ENCODE measurements at regions of chr1 and their contacts with region 1.

Region 1: DNA sequence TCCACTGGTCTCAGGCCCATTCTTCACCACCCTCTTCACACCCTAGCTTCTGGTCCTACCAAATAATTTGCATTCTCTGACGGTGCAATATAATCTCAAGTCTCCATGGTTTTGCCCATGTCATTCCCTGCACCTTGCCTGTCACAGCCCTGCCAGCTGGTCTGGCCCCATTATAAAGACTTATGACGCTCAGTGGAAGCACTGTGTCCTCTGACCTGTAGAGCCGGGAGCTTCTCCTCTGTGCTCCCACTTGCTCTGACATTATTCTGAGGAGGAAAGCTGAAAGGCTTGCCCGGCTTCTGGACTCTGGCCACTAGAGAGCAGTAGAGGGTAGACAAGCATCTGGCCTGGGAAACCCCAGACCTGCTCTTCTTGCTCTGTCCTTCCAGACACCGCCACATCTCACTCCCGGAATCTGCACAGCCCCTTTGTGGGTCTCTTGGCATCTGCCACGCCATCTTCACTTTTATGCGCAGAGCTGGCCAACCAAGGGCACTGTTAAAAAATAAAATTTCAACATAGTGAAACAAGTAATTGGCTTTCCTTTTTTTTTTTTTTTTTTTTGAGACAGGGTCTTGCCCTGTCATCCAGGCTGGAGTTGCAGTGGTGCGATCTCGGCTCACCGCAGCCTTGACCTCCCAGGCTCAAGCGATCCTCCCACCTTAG is 44.4 kb downstream of the NENF start:
- DNase-seq: peak; percentile 87
- H3K4me3 Mint-ChIP-seq: peak overlapping the region; percentile 11
- H3K27ac Mint-ChIP-seq: no peak overlapping the region
- H3K4me1 Mint-ChIP-seq: peaks cover 14% of the 10 kb centered on the region
- H3K27me3 Mint-ChIP-seq: peaks cover 6% of the 10 kb centered on the region

Region 2: GRCh38 chr1:212284744-212285684 is 192.1 kb before region 1 on chr1 and contains the start of gene PPP2R5A:
- CTCF ChIA-PET with region 1: no interaction called
- POLR2A ChIA-PET with region 1: no interaction called
- intact Hi-C with region 1: no loop called
- DNase-seq: peak; percentile 99
- H3K4me3 Mint-ChIP-seq: peak within 1 kb of the TSS; percentile 92
- H3K27ac Mint-ChIP-seq: peak within 1 kb of the TSS; percentile 93
- H3K4me1 Mint-ChIP-seq: peaks cover 31% of the 10 kb centered on the region
- H3K27me3 Mint-ChIP-seq: no peaks in the 10 kb centered on the region
- total RNA-seq, gene PPP2R5A: 38.6 to 40.4 TPM

Region 3: GRCh38 chr1:212355230-212355969 is 121.7 kb before region 1 on chr1:
- CTCF ChIA-PET with region 1: no interaction called
- POLR2A ChIA-PET with region 1: no interaction called
- intact Hi-C with region 1: no loop called
- DNase-seq: no peak
- H3K4me3 Mint-ChIP-seq: no peak overlapping the region
- H3K27ac Mint-ChIP-seq: no peak overlapping the region
- H3K4me1 Mint-ChIP-seq: peaks cover 22% of the 10 kb centered on the region
- H3K27me3 Mint-ChIP-seq: no peaks in the 10 kb centered on the region

Region 4: GRCh38 chr1:212488397-212489283 is 11.5 kb after region 1 on chr1:
- CTCF ChIA-PET with region 1: interaction called, 28 read pairs
- POLR2A ChIA-PET with region 1: interaction called, 4 read pairs
- intact Hi-C with region 1: no loop called
- DNase-seq: peak; percentile 69
- H3K4me3 Mint-ChIP-seq: no peak overlapping the region
- H3K27ac Mint-ChIP-seq: peak overlapping the region; percentile 36
- H3K4me1 Mint-ChIP-seq: peaks cover 7% of the 10 kb centered on the region
- H3K27me3 Mint-ChIP-seq: no peaks in the 10 kb centered on the region

Region 5: DNA sequence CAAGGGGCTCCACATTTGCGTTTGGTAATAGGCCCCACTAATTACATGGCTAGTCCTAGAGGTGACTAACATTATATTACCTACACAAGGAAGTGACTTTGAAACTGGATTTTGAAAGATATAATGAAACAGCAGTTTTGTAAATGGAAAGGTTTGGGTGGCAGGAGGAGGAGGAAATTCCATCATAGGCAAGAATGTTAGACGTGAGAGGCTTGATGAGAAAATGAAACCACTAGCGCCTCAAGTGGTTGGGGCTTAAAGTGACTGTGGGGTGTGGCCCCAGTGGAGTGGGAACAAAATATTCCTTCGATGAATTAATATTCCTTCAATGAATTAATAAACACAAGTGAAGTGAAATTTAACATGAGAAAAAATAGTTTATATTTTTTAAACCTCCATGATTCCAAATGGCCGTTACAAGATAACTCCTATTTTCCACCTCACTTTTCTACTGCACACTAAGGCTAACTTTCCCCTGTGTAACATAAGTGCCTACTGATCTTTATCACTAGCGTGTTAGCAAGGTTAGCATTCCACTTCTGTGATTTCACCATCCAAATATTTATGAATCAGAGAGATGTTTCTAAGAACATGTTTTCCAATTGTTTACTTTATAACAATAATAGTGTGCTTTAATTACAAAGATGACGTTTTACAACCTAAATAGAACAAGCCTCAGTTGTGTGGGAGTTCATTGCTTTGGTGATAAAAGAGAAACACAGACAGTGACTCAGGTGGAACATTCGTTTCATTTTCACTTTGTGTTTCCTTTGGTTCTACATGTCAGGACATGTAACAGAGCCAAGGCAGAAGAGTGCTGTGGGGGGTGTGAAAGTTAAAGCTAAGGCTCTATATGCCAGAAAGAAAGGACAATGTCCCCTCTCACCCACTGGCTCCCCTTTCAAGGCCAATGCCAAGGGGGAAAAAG is 118.9 kb after region 1 on chr1:
- CTCF ChIA-PET with region 1: interaction called, 6 read pairs
- POLR2A ChIA-PET with region 1: no interaction called
- intact Hi-C with region 1: loop called (anchors 1 kb)
- DNase-seq: peak; percentile 59
- H3K4me3 Mint-ChIP-seq: peak overlapping the region; percentile 53
- H3K27ac Mint-ChIP-seq: peak overlapping the region; percentile 90
- H3K4me1 Mint-ChIP-seq: peaks cover 38% of the 10 kb centered on the region
- H3K27me3 Mint-ChIP-seq: peaks cover 15% of the 10 kb centered on the region

Region 6: GRCh38 chr1:212630158-212630900 is 153.2 kb after region 1 on chr1:
- CTCF ChIA-PET with region 1: interaction called, 27 read pairs
- POLR2A ChIA-PET with region 1: no interaction called
- intact Hi-C with region 1: loop called (anchors 1 kb)
- DNase-seq: peak; percentile 80
- H3K4me3 Mint-ChIP-seq: no peak overlapping the region
- H3K27ac Mint-ChIP-seq: no peak overlapping the region
- H3K4me1 Mint-ChIP-seq: peaks cover 7% of the 10 kb centered on the region
- H3K27me3 Mint-ChIP-seq: peaks cover 1% of the 10 kb centered on the region

Region 7: GRCh38 chr1:212683357-212683722 is 206.2 kb after region 1 on chr1:
- CTCF ChIA-PET with region 1: interaction called, 18 read pairs
- POLR2A ChIA-PET with region 1: no interaction called
- intact Hi-C with region 1: no loop called
- DNase-seq: peak; percentile 90
- H3K4me3 Mint-ChIP-seq: peak overlapping the region; percentile 40
- H3K27ac Mint-ChIP-seq: peak overlapping the region; percentile 89
- H3K4me1 Mint-ChIP-seq: peaks cover 58% of the 10 kb centered on the region
- H3K27me3 Mint-ChIP-seq: peaks cover 2% of the 10 kb centered on the region

Region 8: DNA sequence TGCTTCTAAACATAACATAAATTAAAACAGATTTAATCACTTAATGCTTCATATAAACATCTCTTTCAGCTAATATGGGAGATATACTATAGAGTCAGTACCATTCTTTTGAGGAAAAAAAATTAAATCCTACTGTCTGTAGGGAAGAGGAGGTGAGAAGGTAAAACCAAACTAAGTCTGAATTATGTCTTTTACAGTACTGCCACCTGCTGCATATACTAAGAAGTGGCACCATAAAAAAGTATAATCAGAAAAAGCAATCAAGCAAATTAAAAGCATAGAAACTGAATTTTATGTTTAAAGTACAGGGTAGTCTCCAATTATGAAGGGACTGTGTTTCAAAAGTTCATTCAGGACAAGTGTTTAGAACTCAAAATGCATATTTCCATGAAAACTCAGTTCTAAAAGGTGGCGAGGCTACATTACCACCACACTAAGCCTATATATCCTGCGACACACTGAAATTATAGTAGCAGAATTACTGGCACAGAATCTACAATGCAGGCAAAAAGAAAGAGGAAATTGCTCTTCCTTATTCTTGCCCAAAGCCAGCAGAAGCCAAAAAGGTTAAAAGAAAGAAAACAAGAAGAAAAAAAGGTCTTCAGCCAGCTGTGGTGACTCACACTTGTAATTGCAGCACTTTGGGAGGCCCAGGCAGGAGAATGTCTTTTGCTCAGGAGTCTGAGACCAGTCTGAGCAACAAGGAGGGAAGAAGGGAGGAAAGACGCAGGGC is 305.4 kb after region 1 on chr1:
- CTCF ChIA-PET with region 1: interaction called, 26 read pairs
- POLR2A ChIA-PET with region 1: no interaction called
- intact Hi-C with region 1: loop called (anchors 1 kb)
- DNase-seq: no peak
- H3K4me3 Mint-ChIP-seq: no peak overlapping the region
- H3K27ac Mint-ChIP-seq: peak overlapping the region; percentile 6
- H3K4me1 Mint-ChIP-seq: peaks cover 37% of the 10 kb centered on the region
- H3K27me3 Mint-ChIP-seq: no peaks in the 10 kb centered on the region

Region 9: GRCh38 chr1:212994926-212995325 is 517.8 kb after region 1 on chr1:
- CTCF ChIA-PET with region 1: interaction called, 10 read pairs
- POLR2A ChIA-PET with region 1: no interaction called
- intact Hi-C with region 1: loop called (anchors 5 kb)
- DNase-seq: no peak
- H3K4me3 Mint-ChIP-seq: no peak overlapping the region
- H3K27ac Mint-ChIP-seq: no peak overlapping the region
- H3K4me1 Mint-ChIP-seq: peaks cover 10% of the 10 kb centered on the region
- H3K27me3 Mint-ChIP-seq: no peaks in the 10 kb centered on the region

Measured in activated CD4-positive, alpha-beta memory T cell treated with anti-CD3 and anti-CD28 coated beads for 36 hours (primary cell).